ENCODE measurements at regions of chr12 and their contacts with region 1.

Region 1: GRCh38 chr12:93766796-93767523 is 89.8 kb downstream of the CRADD start:
- H3K4me3 Mint-ChIP-seq: no peak overlapping the region
- H3K27ac Mint-ChIP-seq: peak overlapping the region; percentile 52
- H3K4me1 Mint-ChIP-seq: peaks cover 18% of the 10 kb centered on the region
- H3K27me3 Mint-ChIP-seq: no peaks in the 10 kb centered on the region

Region 2: DNA sequence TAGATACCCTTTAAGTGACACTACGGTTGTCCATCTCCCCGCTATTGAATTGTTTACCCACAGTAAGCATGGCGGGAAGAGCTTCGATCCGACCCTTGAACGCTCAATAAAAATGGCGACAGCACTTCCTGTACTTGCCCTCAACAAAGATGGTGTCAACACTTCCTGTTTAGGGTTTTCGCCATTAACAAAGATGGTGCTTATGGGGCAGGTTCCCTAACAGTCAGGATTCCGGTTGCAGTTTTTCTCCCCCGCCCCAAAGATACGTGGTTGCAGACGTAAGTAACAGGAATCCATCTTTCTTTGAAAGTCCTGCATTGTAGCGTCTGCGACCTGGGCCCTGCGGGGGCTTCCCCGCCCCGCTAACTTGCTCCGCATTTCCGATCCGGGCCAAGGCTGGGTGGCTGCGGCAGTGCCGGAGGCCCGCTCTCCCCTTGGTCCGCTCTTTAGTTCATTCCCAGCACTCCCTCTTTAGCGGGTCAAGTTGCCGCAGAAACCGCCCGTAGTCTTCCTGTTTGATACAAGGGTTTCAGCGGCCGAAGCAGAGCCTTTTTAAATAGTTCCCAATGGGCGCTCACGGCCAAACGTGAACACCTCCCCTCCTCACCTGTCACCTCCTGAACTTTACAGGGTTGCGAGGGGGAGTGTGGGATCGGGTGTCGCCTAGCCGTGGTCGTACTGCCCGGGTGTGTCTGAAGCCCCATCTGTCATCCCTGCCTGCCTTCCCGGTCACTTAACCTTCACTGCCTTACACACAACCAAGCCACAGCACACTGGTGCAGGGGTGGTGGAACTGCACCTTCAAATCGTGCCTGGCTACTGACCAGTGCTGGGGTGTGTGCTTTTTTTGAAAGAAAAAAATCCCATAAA is 89.5 kb before region 1 on chr12 and contains the start of gene CRADD:
- intact Hi-C with region 1: no loop called
- H3K4me3 Mint-ChIP-seq: peak within 1 kb of the TSS; percentile 89
- H3K27ac Mint-ChIP-seq: peak within 1 kb of the TSS; percentile 100
- H3K4me1 Mint-ChIP-seq: peaks cover 20% of the 10 kb centered on the region
- H3K27me3 Mint-ChIP-seq: peaks cover 5% of the 10 kb centered on the region

Region 3: GRCh38 chr12:93879476-93880421 is 112.8 kb after region 1 on chr12:
- intact Hi-C with region 1: no loop called
- H3K4me3 Mint-ChIP-seq: no peak overlapping the region
- H3K27ac Mint-ChIP-seq: no peak overlapping the region
- H3K4me1 Mint-ChIP-seq: peaks cover 9% of the 10 kb centered on the region
- H3K27me3 Mint-ChIP-seq: no peaks in the 10 kb centered on the region

Region 4: DNA sequence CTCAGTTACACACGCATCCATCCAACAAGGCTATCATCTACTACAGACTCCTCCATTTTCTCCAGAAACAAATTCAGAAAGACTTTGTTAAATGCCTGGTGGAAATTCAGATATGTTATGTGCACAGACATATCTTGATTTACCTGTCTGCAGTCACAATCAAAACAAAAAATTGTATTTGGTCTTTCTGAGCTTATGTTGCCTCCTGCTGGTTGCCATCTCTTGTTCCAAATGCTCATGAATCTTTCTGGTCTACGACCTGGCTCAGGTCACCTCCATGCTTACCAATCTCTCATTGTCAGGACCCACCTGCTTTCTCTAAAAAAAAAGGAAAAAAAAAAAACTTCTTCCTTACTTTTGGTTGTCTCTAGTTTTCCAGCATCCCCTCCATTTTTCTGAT is 212.2 kb after region 1 on chr12:
- intact Hi-C with region 1: loop called (anchors 5 kb)
- H3K4me3 Mint-ChIP-seq: no peak overlapping the region
- H3K27ac Mint-ChIP-seq: no peak overlapping the region
- H3K4me1 Mint-ChIP-seq: no peaks in the 10 kb centered on the region
- H3K27me3 Mint-ChIP-seq: peaks cover 2% of the 10 kb centered on the region

Region 5: DNA sequence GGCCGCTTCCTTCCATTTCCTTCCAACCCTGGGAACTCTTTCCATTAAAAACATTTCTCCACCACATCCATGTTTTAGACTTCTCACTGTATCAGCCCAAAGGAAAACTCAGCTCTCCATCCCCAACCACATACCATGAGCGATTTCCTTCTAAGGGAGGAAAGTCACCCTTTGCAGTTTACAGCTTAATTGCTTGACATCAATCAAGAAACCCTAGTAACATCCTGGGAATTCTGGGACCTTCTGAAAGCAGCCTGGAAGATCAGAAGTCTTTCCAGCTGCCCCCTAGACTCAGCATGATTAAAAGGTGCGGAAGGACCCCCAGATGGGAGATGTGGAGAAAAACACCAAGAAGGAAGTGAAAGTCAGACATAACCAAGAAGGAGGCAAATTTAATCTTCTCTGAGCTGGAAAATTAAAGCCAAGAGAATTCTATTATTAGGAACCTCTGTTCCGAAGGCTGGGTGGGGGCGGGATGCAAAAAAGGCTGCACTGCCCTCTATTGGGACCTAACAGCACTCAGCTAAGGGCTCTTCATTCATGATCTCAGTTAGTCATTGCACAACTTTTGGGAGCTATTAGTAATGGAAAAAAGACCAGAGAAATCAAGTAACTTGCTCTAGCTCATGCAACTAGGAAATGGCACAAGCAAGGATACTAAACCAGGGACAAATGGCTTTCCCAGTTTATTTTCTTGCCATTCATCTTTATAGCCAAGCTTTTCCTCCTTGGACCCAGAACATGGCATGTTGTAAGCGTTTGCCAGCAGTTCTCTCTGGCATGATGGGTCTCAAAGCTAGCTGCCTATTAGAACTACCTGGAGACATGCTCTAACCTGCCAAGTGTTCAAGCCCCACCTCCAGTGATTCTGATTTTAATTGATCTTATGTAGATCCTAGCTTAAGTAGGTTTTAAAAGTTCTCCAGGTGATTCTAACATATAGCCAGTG is 308.3 kb after region 1 on chr12:
- intact Hi-C with region 1: loop called (anchors 2 kb)
- H3K4me3 Mint-ChIP-seq: no peak overlapping the region
- H3K27ac Mint-ChIP-seq: no peak overlapping the region
- H3K4me1 Mint-ChIP-seq: peaks cover 18% of the 10 kb centered on the region
- H3K27me3 Mint-ChIP-seq: peaks cover 7% of the 10 kb centered on the region

Region 6: DNA sequence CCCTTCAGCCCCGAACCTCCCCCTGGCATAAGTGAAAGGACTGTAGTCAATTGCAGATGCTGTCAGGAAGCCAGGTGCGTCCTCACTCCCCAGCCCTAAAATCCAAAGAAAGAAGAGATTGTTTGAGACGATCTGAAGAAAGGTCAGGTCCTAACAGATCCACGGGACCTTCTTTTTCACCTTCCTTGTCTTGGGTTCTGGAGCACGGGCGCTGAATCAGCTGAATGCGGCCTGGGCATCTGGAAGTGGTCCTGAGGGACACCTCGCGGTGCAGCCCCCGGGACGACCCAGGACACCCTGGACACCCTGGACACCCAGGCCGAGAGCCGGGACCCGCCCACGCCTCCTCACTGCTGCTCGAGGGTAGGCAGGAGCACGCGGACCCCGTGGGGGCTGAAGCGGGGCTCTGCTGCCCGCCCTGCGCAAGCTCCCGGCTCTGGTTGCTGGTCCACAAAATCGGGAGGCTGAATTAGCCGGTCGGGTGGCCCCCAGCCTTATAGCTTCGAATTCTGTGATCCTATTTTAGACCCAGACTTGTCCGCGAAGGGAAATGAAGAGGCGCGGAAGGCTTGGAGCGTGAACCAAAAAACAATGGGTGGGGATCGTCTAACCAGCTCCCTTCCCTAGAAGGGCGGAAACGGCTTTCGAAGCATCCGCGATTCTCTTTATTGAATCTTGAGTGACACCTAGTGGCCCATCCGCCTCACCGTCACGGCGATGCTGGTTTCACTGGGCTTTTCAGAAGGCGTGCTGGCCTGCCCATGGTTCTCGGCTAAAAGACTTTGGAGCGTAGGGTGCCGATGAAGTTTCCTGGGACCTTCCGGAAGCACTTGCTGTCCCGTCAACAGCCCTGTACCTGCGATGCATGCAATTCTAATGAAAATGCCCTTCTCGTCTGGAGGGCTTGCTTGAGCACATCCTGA is 335.0 kb after region 1 on chr12:
- intact Hi-C with region 1: loop called (anchors 2 kb)
- H3K4me3 Mint-ChIP-seq: peak overlapping the region; percentile 68
- H3K27ac Mint-ChIP-seq: no peak overlapping the region
- H3K4me1 Mint-ChIP-seq: peaks cover 23% of the 10 kb centered on the region
- H3K27me3 Mint-ChIP-seq: peaks cover 50% of the 10 kb centered on the region

Measured in dendritic cell treated with granulocyte-macrophage colony-stimulating factor and Interleukin-4, amounts not matched to agents 40 ng/mL and 50 ng/mL, for 4 days (primary cell).